PC-3 (cell line): ENCODE measurements at regions of chr2 and their contacts with region 1.

Region 1: DNA sequence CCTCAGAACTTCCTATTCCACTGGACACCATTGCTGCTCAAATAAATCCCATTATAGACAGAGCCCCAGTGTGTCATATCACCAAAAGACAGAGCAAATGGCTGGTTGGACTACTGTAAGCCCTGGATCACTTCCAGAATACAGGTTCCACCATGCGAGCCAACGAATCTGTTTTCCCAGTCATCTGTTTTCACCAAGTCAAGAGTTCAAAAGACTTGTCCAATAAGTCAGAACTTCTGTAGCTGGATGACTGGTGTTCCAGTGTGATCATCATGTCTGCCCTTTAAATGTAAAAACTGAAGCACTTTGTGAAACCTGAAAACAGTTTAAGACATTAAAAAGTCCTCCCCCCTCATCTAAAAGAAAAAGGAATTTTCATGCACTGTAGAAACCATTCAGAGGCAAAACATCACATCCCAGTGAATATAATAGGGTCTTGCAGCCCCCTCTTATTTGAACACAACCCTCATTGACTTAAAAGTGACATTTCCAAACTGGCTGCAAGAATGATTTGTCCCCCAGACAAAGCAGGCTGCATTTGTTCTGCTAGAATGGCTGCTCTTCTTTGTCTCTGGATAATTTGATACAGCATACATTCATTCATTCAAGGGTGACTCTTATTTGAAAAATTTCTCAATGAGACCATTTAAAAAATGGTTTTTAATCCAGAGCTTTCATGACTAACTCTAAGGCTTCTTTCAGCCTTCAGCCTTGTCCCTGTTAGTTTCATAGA is 64.6 kb upstream of the TANC1 start:
- DNase-seq: no peak
- ATAC-seq: no peak
- H3K4me3 ChIP-seq: no peak overlapping the region
- H3K27ac ChIP-seq: no peak overlapping the region
- H3K4me1 ChIP-seq: no peaks in the 10 kb centered on the region
- H3K27me3 ChIP-seq: no peaks in the 10 kb centered on the region
- CTCF ChIP-seq: no peak

Region 2: DNA sequence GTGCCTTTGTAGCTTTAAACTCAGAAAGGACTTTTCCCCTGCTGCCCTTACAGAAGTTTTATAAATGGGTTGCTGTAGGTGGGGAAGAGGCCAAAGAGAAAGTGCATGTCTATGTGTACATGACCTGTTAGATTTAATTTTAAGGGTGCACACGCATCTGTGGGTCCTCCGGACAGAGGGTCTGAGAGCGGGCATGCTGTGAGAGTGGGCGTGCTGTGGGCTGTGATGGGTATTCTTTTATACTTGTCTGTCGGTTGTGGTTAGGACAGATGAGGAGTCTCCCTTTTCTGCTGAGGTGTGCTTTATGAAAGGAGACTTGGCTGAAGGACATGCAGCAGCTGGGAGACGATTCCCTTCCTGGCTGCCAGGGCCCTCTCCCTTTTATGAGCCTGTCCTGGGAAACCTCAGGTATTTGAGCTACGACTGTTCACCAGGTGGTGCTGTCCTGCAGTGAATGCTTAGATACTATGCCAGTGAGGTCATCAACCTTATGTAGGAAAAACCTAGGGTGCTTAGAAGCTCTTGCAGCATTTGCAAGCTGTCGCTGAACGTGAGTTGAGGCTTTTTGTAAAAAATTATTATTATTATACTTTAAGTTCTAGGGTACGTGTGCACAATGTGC is 132.0 kb after region 1 on chr2:
- CTCF ChIA-PET with region 1: interaction called, 6 read pairs
- POLR2A ChIA-PET with region 1: no interaction called
- intact Hi-C with region 1: loop called (anchors 1 kb)
- DNase-seq: peak; percentile 93
- ATAC-seq: peak; percentile 98
- H3K4me3 ChIP-seq: no peak overlapping the region
- H3K27ac ChIP-seq: no peak overlapping the region
- H3K4me1 ChIP-seq: peaks cover 9% of the 10 kb centered on the region
- H3K27me3 ChIP-seq: no peaks in the 10 kb centered on the region
- CTCF ChIP-seq: peak; percentile 81

Region 3: GRCh38 chr2:159118115-159118858 is 214.4 kb after region 1 on chr2:
- CTCF ChIA-PET with region 1: interaction called, 4 read pairs
- POLR2A ChIA-PET with region 1: no interaction called
- intact Hi-C with region 1: loop called (anchors 1 kb)
- DNase-seq: peak; percentile 89
- ATAC-seq: peak; percentile 91
- H3K4me3 ChIP-seq: no peak overlapping the region
- H3K27ac ChIP-seq: peak overlapping the region; percentile 18; the same call in 1 of the 2 replicates
- H3K4me1 ChIP-seq: peaks cover 10% of the 10 kb centered on the region
- H3K27me3 ChIP-seq: no peaks in the 10 kb centered on the region
- CTCF ChIP-seq: peak; percentile 96

Region 4: GRCh38 chr2:159168707-159169106 is 264.8 kb after region 1 on chr2:
- CTCF ChIA-PET with region 1: no interaction called
- POLR2A ChIA-PET with region 1: no interaction called
- intact Hi-C with region 1: loop called (anchors 1 kb)
- DNase-seq: peak; percentile 15
- ATAC-seq: peak; percentile 54
- H3K4me3 ChIP-seq: no peak overlapping the region
- H3K27ac ChIP-seq: no peak overlapping the region
- H3K4me1 ChIP-seq: no peaks in the 10 kb centered on the region
- H3K27me3 ChIP-seq: no peaks in the 10 kb centered on the region
- CTCF ChIP-seq: peak; percentile 43; the same call in 1 of the 2 replicates

Region 5: DNA sequence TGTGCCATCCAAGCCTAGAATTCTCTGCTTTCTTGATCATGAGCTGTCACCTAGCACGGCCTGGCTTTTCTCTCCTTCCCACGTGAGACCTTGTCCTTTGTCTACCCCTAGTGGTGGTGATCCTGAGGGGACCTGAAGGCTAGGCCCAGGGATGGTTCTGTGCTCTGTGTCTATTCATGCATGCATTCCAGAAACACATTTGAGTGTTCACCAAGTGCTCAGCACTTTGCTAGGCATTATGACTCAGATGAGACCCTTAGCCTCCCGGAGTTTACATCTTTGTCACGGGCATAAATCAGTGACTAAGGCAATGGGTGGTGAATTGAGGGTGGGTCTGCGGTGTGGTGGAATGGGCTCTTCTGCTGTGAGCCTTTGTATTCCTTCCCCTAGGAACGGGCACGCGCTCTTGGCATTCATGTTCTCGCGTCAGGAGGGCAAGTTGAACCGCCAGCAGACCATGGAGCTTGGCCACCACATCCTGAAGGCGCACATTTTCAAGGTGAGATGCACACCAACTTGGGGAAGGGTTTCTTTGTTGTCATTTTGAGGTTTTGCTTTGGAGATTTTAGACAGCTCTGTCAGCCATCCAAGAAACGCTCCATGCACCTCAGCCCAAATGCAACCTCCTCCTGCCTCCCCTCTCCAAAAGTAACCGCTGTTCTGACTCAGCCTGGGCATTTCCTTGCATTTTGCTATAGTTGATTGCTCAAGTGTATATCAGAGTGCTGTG is 281.7 kb after region 1 on chr2:
- CTCF ChIA-PET with region 1: no interaction called
- POLR2A ChIA-PET with region 1: no interaction called
- intact Hi-C with region 1: loop called (anchors 1 kb)
- DNase-seq: peak; percentile 31
- ATAC-seq: peak; percentile 74
- H3K4me3 ChIP-seq: no peak overlapping the region
- H3K27ac ChIP-seq: no peak overlapping the region
- H3K4me1 ChIP-seq: no peaks in the 10 kb centered on the region
- H3K27me3 ChIP-seq: no peaks in the 10 kb centered on the region
- CTCF ChIP-seq: peak; percentile 63

Region 6: GRCh38 chr2:159307942-159308341 is 404.1 kb after region 1 on chr2:
- CTCF ChIA-PET with region 1: no interaction called
- POLR2A ChIA-PET with region 1: no interaction called
- intact Hi-C with region 1: no loop called
- DNase-seq: no peak
- ATAC-seq: no peak
- H3K4me3 ChIP-seq: no peak overlapping the region
- H3K27ac ChIP-seq: no peak overlapping the region
- H3K4me1 ChIP-seq: no peaks in the 10 kb centered on the region
- H3K27me3 ChIP-seq: no peaks in the 10 kb centered on the region
- CTCF ChIP-seq: no peak